ENCODE measurements at regions of chr1 and their contacts with region 1.

Region 1: GRCh38 chr1:202728951-202729350 is 18.7 kb upstream of the SYT2 start:
- DNase-seq: no peak
- ATAC-seq: no peak
- H3K4me3 Mint-ChIP-seq: no peak overlapping the region
- H3K27ac Mint-ChIP-seq: no peak overlapping the region
- H3K4me1 Mint-ChIP-seq: no peaks in the 10 kb centered on the region
- H3K27me3 Mint-ChIP-seq: no peaks in the 10 kb centered on the region
- CTCF ChIP-seq: no peak

Region 2: DNA sequence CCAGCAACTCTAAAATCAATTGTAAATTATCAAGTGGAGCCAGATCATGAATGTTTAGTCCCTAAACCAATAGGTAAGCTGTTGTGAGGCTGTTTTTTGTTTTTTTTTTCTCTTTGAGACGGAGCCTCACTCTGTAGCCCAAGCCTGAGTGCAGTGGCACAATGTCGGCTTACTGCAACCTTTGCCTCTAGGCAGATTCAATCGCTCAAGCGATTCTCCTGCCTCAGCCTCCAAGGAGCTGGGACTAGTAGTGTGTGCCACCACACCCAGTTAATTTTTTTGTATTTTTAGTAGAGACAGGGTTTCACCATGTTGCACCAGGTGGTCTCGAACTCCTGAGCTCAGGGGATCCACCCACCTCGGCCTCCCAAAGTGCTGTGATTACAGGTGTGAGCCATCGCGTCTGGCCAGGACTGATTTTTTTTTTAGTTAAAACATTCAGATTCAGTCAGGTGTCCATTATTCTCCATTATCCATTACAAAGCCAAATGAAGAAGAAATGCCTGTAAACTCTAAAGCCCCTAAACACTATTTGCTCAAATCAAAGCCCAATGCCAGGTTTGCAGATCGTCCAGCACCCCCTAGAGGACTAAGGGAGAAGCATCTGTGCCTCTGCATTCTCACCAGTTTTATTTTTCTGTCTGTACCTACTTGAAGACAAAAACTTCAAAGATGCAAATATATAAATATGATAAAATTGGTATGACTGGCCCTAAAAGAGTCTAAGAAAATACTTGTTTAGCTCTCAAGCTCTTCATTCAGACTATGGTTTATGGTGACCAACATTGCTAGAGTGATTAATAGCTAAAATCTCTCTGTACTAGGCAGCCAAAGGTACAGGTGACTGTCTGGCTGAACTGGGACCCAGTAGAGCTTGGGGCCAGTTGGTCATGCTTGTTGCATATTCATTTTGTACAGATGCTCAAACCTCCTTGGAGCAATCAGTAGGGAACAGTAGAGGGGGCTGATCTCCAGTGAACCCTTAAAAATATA is 157.3 kb before region 1 on chr1:
- CTCF ChIA-PET with region 1: no interaction called
- POLR2A ChIA-PET with region 1: no interaction called
- intact Hi-C with region 1: no loop called
- DNase-seq: peak; percentile 53
- ATAC-seq: peak; percentile 73
- H3K4me3 Mint-ChIP-seq: no peak overlapping the region
- H3K27ac Mint-ChIP-seq: no peak overlapping the region
- H3K4me1 Mint-ChIP-seq: peaks cover 3% of the 10 kb centered on the region
- H3K27me3 Mint-ChIP-seq: no peaks in the 10 kb centered on the region
- CTCF ChIP-seq: peak; percentile 91

Region 3: DNA sequence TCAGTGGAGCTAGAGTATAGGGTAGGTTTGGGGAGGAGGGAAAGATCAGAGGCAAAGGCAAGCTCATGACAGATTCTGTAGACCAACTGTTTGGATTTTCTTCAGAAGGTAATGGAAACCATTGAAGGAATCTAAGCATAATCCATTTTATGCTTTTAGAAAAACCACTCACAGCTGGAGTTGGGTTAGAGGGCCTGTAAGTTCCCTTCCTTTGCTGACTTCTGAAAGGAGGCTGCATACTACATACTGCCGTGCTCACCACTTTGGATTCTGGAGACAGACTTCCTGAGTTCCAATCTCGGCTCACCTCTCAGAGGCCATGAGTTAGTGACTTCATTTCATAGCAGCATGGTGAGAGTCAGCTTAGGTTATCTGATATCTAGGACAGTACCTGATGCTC is 12.3 kb before region 1 on chr1:
- CTCF ChIA-PET with region 1: interaction called, 17 read pairs
- POLR2A ChIA-PET with region 1: interaction called, 3 read pairs
- intact Hi-C with region 1: no loop called
- DNase-seq: no peak
- ATAC-seq: no peak
- H3K4me3 Mint-ChIP-seq: no peak overlapping the region
- H3K27ac Mint-ChIP-seq: no peak overlapping the region
- H3K4me1 Mint-ChIP-seq: peaks cover 4% of the 10 kb centered on the region
- H3K27me3 Mint-ChIP-seq: peaks cover 17% of the 10 kb centered on the region
- CTCF ChIP-seq: no peak

Region 4: DNA sequence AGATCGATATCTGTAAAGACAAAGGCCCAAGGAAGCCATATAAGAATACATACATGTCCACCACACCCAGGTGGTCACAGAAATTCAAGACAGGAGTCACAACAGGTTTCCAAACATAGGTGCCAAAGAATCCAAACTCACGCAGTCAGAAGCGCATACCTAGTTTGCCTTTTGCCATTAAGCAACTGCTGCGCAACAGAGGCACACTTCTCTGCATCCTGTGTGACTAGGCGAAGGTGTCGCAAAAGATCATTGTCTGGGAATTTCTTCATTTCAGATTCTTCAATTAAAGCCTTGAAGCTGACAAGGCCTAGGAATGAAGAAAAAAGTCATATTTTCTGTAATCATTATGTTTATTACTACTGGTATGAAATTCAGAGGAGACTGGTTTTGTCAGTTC is 13.5 kb after region 1 on chr1:
- CTCF ChIA-PET with region 1: no interaction called
- POLR2A ChIA-PET with region 1: no interaction called
- intact Hi-C with region 1: no loop called
- DNase-seq: no peak
- ATAC-seq: no peak
- H3K4me3 Mint-ChIP-seq: no peak overlapping the region
- H3K27ac Mint-ChIP-seq: no peak overlapping the region
- H3K4me1 Mint-ChIP-seq: no peaks in the 10 kb centered on the region
- H3K27me3 Mint-ChIP-seq: no peaks in the 10 kb centered on the region
- CTCF ChIP-seq: no peak

Measured in activated CD8-positive, alpha-beta T cell treated with anti-CD3 and anti-CD28 coated beads for 36 hours (primary cell).